OCI-LY7 (cell line): ENCODE measurements at regions of chr1 and their contacts with region 1.

Region 1: GRCh38 chr1:200620273-200621131 is at the start of gene KIF14:
- DNase-seq: peak; percentile 94
- H3K4me3 ChIP-seq: peak within 1 kb of the TSS; percentile 88
- H3K27ac ChIP-seq: peak within 1 kb of the TSS; percentile 38
- H3K4me1 ChIP-seq: peaks cover 8% of the 10 kb centered on the region
- CTCF ChIP-seq: no peak
- total RNA-seq, gene KIF14: 15.0 and 17.8 TPM in 2 replicates

Region 2: DNA sequence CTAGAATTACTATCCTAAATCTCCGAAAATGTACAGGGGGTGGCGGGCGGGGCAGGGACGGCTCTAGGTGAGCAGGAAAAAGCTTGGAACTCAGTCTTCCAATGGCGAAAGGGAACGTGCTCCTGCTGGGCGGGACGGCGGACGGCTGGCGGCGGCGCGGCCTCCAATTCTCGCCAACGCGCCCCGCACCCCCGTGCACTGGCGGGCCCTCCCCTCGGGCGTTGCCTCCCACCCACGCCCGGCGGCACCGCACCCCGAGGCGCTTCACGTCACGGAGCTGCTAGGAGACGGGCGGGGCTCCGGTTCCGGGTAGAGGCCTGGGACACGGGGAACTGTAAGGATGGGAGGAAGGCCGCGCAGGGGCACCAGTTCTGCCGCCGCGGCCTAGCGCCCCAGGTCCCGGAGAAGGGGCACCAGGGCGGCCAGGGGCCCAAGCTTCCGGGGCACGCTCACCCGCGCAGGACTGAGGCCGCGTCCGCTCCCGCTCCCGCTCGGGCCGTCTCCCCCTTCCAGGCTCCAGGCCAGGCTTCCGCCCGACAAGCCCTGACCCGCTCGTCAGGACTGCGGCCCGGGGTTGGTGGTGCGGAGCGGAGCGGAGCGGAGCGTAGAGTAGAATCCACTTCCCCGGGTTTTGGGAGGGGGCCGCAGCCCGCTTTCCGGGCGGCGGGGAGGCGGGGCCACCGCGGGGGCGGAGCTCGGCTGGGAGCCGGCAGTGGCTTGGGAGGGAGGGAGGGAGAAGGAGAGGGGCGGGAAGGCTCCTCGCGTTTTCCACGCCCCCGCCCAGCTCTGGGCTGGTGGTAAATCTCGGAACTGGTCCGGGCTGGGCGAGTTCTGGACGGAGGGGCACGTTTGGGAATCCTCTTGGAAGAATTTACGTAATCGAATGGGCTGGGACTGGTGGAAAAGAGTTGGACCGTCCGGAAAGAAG is 49.1 kb after region 1 on chr1 and contains the start of gene DDX59:
- CTCF ChIA-PET with region 1: no interaction called
- POLR2A ChIA-PET with region 1: interaction called, 21 read pairs
- intact Hi-C with region 1: loop called (anchors 1 kb)
- DNase-seq: peak; percentile 92
- H3K4me3 ChIP-seq: peak within 1 kb of the TSS; percentile 78
- H3K27ac ChIP-seq: peak within 1 kb of the TSS; percentile 70
- H3K4me1 ChIP-seq: peaks cover 16% of the 10 kb centered on the region
- CTCF ChIP-seq: no peak
- total RNA-seq, gene DDX59: 22.4 and 28.7 TPM in 2 replicates

Region 3: GRCh38 chr1:200738740-200739498 is 118.4 kb after region 1 on chr1 and contains the start of gene CAMSAP2:
- CTCF ChIA-PET with region 1: no interaction called
- POLR2A ChIA-PET with region 1: no interaction called
- intact Hi-C with region 1: loop called (anchors 5 kb)
- DNase-seq: peak; percentile 77
- H3K4me3 ChIP-seq: peak within 1 kb of the TSS; percentile 97
- H3K27ac ChIP-seq: peak within 1 kb of the TSS; percentile 55
- H3K4me1 ChIP-seq: peaks cover 23% of the 10 kb centered on the region
- CTCF ChIP-seq: no peak
- total RNA-seq, gene CAMSAP2: 9.2 and 10.0 TPM in 2 replicates

Region 4: GRCh38 chr1:200802865-200803512 is 182.5 kb after region 1 on chr1:
- CTCF ChIA-PET with region 1: no interaction called
- POLR2A ChIA-PET with region 1: interaction called, 5 read pairs
- intact Hi-C with region 1: loop called (anchors 1 kb)
- DNase-seq: peak; percentile 77
- H3K4me3 ChIP-seq: no peak overlapping the region
- H3K27ac ChIP-seq: no peak overlapping the region
- H3K4me1 ChIP-seq: no peaks in the 10 kb centered on the region
- CTCF ChIP-seq: peak; percentile 99

Region 5: GRCh38 chr1:200837931-200838571 is 217.5 kb after region 1 on chr1:
- CTCF ChIA-PET with region 1: no interaction called
- POLR2A ChIA-PET with region 1: interaction called, 6 read pairs
- intact Hi-C with region 1: loop called (anchors 2 kb)
- DNase-seq: peak; percentile 21
- H3K4me3 ChIP-seq: no peak overlapping the region
- H3K27ac ChIP-seq: no peak overlapping the region
- H3K4me1 ChIP-seq: no peaks in the 10 kb centered on the region
- CTCF ChIP-seq: peak; percentile 88

Region 6: GRCh38 chr1:200849430-200849829 is 228.9 kb after region 1 on chr1:
- CTCF ChIA-PET with region 1: no interaction called
- POLR2A ChIA-PET with region 1: no interaction called
- intact Hi-C with region 1: no loop called
- DNase-seq: no peak
- H3K4me3 ChIP-seq: no peak overlapping the region
- H3K27ac ChIP-seq: no peak overlapping the region
- H3K4me1 ChIP-seq: no peaks in the 10 kb centered on the region
- CTCF ChIP-seq: no peak

Region 7: GRCh38 chr1:201023517-201023902 is 403.0 kb after region 1 on chr1 and contains the start of gene KIF21B:
- CTCF ChIA-PET with region 1: no interaction called
- POLR2A ChIA-PET with region 1: no interaction called
- intact Hi-C with region 1: loop called (anchors 10 kb)
- DNase-seq: peak; percentile 92
- H3K4me3 ChIP-seq: peak within 1 kb of the TSS; percentile 80
- H3K27ac ChIP-seq: peak within 1 kb of the TSS; percentile 97
- H3K4me1 ChIP-seq: peaks cover 83% of the 10 kb centered on the region
- CTCF ChIP-seq: no peak
- total RNA-seq, gene KIF21B: 25.0 and 30.5 TPM in 2 replicates

Region 8: DNA sequence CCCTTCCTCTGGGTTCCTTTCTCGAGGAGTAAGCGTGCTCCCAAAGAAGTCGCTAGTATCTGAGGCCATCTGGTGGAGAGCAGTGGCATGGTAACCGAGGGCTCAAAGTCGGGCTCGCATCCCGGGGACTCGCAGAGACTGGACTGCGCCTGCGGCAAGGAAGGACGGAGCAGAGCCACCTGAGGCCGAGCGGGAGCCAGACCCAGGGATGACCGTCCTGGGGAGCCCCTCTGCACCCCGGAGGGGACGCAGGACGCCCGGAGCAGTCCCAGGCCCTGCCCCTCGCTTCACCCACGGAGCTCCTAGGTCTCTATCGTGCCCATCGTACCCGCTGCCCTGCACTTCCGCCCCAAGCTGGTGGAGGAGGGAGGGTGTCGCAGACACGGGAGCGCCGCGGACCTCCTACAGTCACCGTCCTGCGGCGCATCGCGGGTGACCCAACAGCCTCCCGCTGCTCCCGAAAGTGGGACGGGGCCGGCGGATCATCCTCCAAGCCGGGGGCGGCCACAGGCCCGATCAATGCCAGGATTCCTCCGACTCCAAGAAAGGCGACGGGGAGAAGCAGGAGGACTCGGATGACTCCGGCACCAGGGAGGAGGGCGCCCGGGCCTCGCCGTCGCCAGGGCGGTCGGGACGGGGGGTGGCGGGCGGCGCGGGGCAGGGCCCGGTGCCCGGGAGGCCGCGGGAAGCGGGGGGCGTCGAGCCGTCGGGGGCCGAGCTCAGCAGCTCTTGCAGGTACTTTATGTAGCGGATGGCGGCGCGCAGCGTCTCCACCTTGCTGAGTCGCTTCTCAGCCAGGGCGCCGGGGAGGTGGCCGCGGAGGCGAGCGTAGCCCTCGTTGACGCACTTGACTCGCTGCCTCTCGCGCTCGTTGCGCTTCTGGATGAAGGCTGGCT is 494.0 kb after region 1 on chr1:
- CTCF ChIA-PET with region 1: no interaction called
- POLR2A ChIA-PET with region 1: no interaction called
- intact Hi-C with region 1: loop called (anchors 10 kb)
- DNase-seq: peak; percentile 55
- H3K4me3 ChIP-seq: no peak overlapping the region
- H3K27ac ChIP-seq: no peak overlapping the region
- H3K4me1 ChIP-seq: peaks cover 5% of the 10 kb centered on the region
- CTCF ChIP-seq: peak; percentile 73